K562 (cell line): ENCODE measurements at regions of chr4 and their contacts with region 1.

Region 1: GRCh38 chr4:7802093-7802726 is 137.5 kb downstream of the AFAP1 start:
- DNase-seq: peak; percentile 76 to 90 (median 84)
- ATAC-seq: peak; percentile 94
- H3K4me3 ChIP-seq: no peak overlapping the region
- H3K27ac ChIP-seq: no peak overlapping the region
- H3K4me1 ChIP-seq: no peaks in the 10 kb centered on the region; a peak in 2 of 5 replicates
- H3K27me3 ChIP-seq: peaks cover 18 to 55% of the 10 kb centered on the region in 2 experiments
- CTCF ChIP-seq: peak; percentile 84 to 94 (median 89)
- EP300 ChIP-seq: no peak
- POLR2A ChIP-seq: no peak
- RAD21 ChIP-seq: peak; percentile 78 to 84

Region 2: DNA sequence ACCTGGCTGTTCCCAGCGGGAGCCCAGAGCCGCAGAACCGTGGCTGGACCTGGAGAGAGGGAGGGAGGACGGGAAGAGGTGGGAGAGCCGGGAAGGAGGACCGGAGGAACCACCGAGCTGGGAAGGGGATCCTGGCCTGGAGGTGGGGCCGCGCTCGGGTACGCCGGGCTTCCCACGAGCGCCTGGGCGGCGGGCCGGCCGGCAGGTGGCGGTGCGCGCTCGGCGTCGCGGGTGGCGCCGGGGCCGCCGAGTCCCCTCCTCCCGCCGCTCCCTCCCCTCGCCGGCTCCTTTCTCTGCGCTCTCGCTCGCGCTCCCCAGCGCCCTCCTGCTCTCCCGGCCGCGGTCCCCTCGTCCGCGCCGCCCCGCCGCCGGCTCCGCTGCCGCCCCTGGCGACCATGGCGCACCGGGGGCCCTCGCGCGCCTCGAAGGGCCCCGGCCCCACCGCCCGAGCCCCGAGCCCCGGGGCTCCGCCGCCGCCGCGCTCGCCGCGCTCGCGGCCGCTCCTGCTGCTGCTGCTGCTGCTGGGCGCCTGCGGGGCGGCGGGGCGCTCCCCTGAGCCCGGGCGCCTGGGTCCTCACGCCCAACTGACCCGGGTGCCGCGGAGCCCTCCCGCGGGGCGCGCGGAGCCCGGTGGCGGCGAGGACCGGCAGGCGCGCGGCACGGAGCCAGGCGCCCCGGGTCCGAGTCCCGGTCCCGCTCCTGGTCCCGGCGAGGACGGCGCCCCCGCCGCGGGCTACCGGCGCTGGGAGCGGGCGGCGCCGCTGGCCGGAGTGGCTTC is 609.8 kb before region 1 on chr4 and contains the start of gene SORCS2:
- CTCF ChIA-PET with region 1: no interaction called
- POLR2A ChIA-PET with region 1: no interaction called
- in situ Hi-C with region 1: no loop called
- intact Hi-C with region 1: loop called (anchors 10 kb)
- DNase-seq: peak; percentile 53 to 84 (median 78)
- ATAC-seq: peak; percentile 93
- H3K4me3 ChIP-seq: no peak within 1 kb of the TSS
- H3K27ac ChIP-seq: no peak within 1 kb of the TSS
- H3K4me1 ChIP-seq: peaks cover 0 to 10% of the 10 kb centered on the region in 2 experiments; a peak in 2 of 5 replicates
- H3K27me3 ChIP-seq: peaks cover 24 to 45% of the 10 kb centered on the region in 2 experiments; a peak in 4 of 5 replicates
- CTCF ChIP-seq: peak; percentile 32 to 68 (median 52); a peak in 3 of 6 replicates
- EP300 ChIP-seq: no peak
- POLR2A ChIP-seq: no peak
- RAD21 ChIP-seq: peak in 1 of 2 experiments; percentile 83; a peak in 3 of 4 replicates
- polyA plus RNA-seq, gene SORCS2: not detected

Region 3: DNA sequence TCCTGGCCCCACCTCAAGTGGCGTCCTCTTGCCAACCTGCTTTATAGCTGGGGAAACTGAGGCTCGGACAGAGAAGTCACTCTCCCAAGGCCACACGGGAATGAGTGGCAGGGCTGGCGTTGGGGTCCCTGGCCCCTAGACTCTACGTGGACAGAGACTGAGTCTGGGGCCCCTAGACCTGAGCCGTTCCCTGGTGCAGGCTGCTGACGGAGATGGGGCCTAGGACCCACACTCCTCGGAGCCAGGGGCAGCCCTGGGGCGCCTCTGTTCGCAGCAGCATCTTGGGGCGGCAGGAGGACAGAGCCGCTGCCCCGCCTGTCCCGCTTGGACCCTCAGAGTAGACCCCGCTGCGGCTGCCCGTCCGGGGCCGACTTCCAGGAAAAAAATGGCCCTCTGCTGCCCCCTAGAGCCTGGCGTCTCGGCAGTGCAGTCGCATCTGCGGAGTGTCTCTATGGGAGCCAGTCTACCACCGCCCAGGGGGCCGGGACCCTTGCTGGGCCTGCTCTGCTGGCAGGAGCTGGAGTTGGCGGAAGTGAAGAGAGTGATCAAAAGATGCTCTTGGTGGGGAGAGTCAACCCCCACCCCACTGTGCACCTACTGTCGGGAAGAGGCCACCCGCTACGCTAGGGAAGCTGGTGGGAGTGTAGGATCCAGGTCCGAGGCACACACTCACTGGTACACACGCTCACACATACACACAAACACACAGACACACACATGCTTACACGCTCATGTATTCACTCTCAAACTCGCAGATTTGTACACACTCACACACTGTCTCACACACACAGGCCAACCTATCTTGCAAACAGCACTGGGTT is 82.6 kb before region 1 on chr4:
- CTCF ChIA-PET with region 1: no interaction called
- POLR2A ChIA-PET with region 1: no interaction called
- in situ Hi-C with region 1: no loop called
- intact Hi-C with region 1: loop called (anchors 5 kb)
- DNase-seq: peak; percentile 58 to 79 (median 76)
- ATAC-seq: peak; percentile 96
- H3K4me3 ChIP-seq: no peak overlapping the region
- H3K27ac ChIP-seq: no peak overlapping the region
- H3K4me1 ChIP-seq: peaks cover 0 to 9% of the 10 kb centered on the region in 2 experiments; a peak in 1 of 5 replicates
- H3K27me3 ChIP-seq: peaks cover 18 to 42% of the 10 kb centered on the region in 2 experiments
- CTCF ChIP-seq: peak; percentile 69 to 76 (median 74)
- EP300 ChIP-seq: no peak
- POLR2A ChIP-seq: no peak
- RAD21 ChIP-seq: peak; percentile 33 to 68

Region 4: DNA sequence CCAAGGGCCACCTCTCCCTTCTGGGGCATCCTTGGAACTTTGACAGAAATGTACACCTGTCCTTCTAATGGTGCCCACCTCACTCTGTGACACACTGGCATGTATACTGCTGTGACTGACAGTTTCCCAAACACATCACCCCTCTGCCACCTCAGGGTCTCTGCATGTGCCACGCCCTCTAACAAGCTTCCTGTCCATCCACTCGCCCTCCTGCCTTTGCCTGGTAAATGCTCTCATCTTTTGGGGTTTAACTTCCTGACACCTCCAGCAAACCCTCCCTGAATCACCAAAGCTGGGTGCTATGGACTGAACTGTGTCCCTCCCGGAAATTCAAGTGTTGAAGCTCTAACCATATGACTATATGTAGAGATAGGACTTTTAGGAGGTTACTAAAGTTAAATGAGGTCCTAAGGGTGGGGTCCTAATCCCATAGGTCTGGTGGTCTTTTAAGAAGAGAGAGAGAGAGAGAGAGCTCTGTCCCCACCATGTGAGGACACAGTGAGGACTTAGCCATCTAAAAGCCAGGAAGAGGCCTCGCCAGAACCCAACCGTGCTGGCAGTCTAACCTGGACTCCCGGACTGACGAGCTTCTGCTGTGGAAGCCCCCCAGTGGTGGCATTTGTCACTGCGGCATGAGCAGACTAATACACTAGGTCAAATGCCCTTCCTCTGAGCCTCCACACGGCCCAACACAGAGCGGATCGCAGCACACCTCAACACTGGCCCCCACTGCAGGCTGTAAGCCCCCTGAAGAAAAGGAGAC is 41.8 kb after region 1 on chr4:
- CTCF ChIA-PET with region 1: no interaction called
- POLR2A ChIA-PET with region 1: interaction called, 4 read pairs
- in situ Hi-C with region 1: no loop called
- intact Hi-C with region 1: loop called (anchors 5 kb)
- DNase-seq: peak; percentile 50 to 66 (median 62)
- ATAC-seq: peak; percentile 95
- H3K4me3 ChIP-seq: no peak overlapping the region
- H3K27ac ChIP-seq: no peak overlapping the region
- H3K4me1 ChIP-seq: no peaks in the 10 kb centered on the region
- H3K27me3 ChIP-seq: peaks cover 3 to 34% of the 10 kb centered on the region in 2 experiments; a peak in 4 of 5 replicates
- CTCF ChIP-seq: peak; percentile 64 to 74 (median 67)
- EP300 ChIP-seq: no peak
- POLR2A ChIP-seq: no peak
- RAD21 ChIP-seq: peak in 1 of 2 experiments; percentile 48; a peak in 3 of 4 replicates

Region 5: DNA sequence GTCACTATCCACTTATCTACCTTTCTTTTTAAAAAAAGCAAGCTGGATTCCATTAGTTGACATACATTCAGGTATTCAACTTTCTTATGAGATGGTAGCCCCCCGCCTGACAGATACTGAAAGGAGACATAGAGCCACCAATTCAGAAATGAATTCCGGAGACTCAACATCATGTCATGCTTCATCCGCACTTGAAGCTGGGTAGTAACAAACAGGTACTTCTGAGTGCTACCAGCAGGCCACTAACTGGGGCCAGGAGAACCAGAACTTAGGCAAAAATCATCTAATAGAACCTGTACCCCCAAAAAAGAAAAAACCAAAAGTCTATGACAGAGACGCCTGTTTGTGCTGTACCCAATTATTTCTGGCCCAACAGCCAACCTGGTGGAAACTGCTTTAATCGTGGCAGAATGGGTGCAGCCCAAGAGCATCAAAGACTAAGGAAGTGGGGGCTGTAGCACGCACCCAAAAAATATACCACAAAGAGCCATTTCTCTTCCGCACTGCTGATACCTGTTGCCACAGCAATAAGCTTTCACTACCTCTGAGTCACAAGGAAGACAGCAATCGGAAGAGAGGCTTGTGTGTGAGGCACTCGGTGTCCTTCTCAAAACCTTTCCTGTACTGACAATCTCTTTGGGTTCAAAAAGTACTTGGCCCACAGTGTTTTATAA is 52.6 kb after region 1 on chr4:
- CTCF ChIA-PET with region 1: interaction called, 6 read pairs
- POLR2A ChIA-PET with region 1: interaction called, 6 read pairs
- in situ Hi-C with region 1: loop called (anchors 5 kb)
- intact Hi-C with region 1: loop called (anchors 1 kb)
- DNase-seq: no peak
- ATAC-seq: no peak
- H3K4me3 ChIP-seq: no peak overlapping the region
- H3K27ac ChIP-seq: no peak overlapping the region
- H3K4me1 ChIP-seq: no peaks in the 10 kb centered on the region
- H3K27me3 ChIP-seq: peaks cover 11 to 61% of the 10 kb centered on the region in 2 experiments
- CTCF ChIP-seq: no peak
- EP300 ChIP-seq: no peak
- POLR2A ChIP-seq: no peak
- RAD21 ChIP-seq: no peak

Region 6: GRCh38 chr4:7987148-7987989 is 185.2 kb after region 1 on chr4:
- CTCF ChIA-PET with region 1: interaction called, 5 read pairs
- POLR2A ChIA-PET with region 1: no interaction called
- in situ Hi-C with region 1: loop called (anchors 5 kb)
- intact Hi-C with region 1: loop called (anchors 1 kb)
- DNase-seq: peak; percentile 61 to 77 (median 73)
- ATAC-seq: peak; percentile 92
- H3K4me3 ChIP-seq: no peak overlapping the region
- H3K27ac ChIP-seq: no peak overlapping the region
- H3K4me1 ChIP-seq: no peaks in the 10 kb centered on the region
- H3K27me3 ChIP-seq: peaks cover 4 to 36% of the 10 kb centered on the region in 2 experiments; a peak in 3 of 5 replicates
- CTCF ChIP-seq: peak; percentile 73 to 86 (median 82)
- EP300 ChIP-seq: no peak
- POLR2A ChIP-seq: no peak
- RAD21 ChIP-seq: peak; percentile 62 to 82

Region 7: DNA sequence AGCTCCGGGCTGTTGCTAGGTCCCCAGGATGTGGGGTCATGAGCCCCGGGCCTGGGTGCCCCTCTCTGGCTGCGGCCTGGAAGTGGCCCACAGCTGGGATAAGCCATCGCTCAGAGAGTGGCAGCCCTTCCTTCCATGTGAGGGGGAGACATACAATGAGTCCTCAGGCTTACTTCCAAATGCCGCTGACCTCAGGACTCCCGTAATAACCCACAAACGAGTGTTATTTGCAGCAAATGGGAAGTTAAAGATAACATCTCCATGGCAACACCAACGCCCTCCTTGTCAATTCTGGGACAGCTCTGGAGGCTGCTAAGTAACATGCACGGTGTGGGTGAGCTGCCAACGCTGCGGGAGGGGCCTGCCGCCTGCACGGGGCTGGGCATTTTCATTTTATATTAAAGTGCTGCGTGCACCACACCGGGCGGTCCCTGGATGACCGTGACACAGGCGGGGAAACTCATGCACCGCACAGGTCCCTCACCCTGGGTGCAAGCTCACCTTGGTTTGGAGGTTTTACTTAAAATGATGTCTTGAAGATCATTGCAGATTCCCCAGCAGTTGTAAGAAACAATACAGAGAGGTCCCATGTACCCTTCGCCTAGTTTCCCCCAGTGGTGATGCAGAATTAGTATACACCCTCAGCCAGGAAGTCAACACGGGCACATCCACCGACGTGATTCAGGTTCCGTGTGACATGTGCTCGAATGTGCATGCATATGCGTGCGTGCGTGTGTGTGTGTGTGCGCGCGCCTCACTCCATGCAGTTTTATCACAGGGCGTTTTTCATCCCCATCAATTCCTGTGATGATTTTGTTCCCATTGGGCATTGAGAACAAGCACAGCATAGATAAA is 277.0 kb after region 1 on chr4:
- CTCF ChIA-PET with region 1: no interaction called
- POLR2A ChIA-PET with region 1: no interaction called
- in situ Hi-C with region 1: no loop called
- intact Hi-C with region 1: no loop called
- DNase-seq: peak; percentile 20 to 45 (median 30)
- ATAC-seq: peak; percentile 76
- H3K4me3 ChIP-seq: no peak overlapping the region
- H3K27ac ChIP-seq: no peak overlapping the region
- H3K4me1 ChIP-seq: peaks cover 0 to 10% of the 10 kb centered on the region in 2 experiments; a peak in 4 of 5 replicates
- H3K27me3 ChIP-seq: peaks cover 3 to 43% of the 10 kb centered on the region in 2 experiments; a peak in 2 of 5 replicates
- CTCF ChIP-seq: no peak
- EP300 ChIP-seq: no peak
- POLR2A ChIP-seq: no peak
- RAD21 ChIP-seq: no peak